SK-N-SH (cell line): ENCODE measurements at regions of chr5 and their contacts with region 1.

Region 1: GRCh38 chr5:137778772-137779564 is 24.8 kb upstream of the HNRNPA0 start:
- DNase-seq: peak; percentile 35
- H3K4me3 ChIP-seq: no peak overlapping the region; a peak in 1 of 4 replicates
- H3K27ac ChIP-seq: no peak overlapping the region
- H3K4me1 ChIP-seq: no peaks in the 10 kb centered on the region
- H3K27me3 ChIP-seq: no peaks in the 10 kb centered on the region
- CTCF ChIP-seq: peak; percentile 83
- EP300 ChIP-seq: no peak
- RAD21 ChIP-seq: peak; percentile 81

Region 2: DNA sequence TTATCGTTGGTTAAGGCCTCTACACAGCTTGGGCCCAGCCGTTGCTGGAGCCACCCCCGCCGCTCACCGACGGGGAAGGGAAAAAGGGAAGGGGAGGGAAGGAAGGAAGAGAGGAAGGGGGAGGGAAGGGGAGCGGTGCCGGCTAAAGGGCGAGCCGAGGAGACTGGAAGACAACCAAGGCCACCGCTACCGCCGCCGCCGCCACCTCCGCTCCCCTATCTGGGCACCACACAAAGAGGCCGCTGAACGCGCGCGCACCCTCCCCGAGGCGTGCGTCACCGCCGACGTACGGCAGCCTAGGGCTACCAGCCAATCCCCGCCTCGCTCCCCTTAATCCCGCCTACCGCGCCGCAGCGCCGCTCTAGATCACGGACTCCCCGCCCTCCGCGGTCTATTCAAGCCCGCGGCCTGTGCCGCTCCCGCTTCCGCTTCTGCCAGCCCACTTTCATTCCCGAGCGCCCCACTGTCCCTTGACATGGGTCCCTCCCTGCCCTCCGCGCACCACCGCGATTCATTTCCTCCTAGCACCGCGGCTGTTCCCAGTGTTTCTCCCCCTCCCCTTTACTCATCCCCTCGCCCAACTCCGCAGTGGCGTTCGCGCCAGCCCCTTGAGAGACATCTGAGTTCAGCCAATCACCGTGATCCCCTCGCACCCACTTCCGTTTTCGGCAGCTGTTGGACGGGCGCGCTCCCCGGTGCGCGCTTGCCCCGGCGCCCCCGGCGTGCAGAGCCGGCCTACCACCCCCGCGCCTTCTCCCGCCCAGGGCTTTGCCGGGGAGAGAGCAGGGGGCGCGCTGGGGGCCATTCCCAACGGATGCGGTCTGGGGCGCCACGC is 24.6 kb before region 1 on chr5 and contains the start of gene HNRNPA0:
- CTCF ChIA-PET with region 1: interaction called, 51 read pairs
- POLR2A ChIA-PET with region 1: interaction called, 3 read pairs
- DNase-seq: peak; percentile 97
- H3K4me3 ChIP-seq: peak within 1 kb of the TSS; percentile 93 to 94
- H3K27ac ChIP-seq: peak within 1 kb of the TSS; percentile 97
- H3K4me1 ChIP-seq: peaks cover 0 to 6% of the 10 kb centered on the region in 2 experiments; a peak in 2 of 4 replicates
- H3K27me3 ChIP-seq: no peaks in the 10 kb centered on the region
- CTCF ChIP-seq: no peak
- EP300 ChIP-seq: peak; percentile 97 to 99
- RAD21 ChIP-seq: no peak
- polyA plus RNA-seq, gene HNRNPA0: 19.2 and 24.9 TPM in 2 replicates

Region 3: DNA sequence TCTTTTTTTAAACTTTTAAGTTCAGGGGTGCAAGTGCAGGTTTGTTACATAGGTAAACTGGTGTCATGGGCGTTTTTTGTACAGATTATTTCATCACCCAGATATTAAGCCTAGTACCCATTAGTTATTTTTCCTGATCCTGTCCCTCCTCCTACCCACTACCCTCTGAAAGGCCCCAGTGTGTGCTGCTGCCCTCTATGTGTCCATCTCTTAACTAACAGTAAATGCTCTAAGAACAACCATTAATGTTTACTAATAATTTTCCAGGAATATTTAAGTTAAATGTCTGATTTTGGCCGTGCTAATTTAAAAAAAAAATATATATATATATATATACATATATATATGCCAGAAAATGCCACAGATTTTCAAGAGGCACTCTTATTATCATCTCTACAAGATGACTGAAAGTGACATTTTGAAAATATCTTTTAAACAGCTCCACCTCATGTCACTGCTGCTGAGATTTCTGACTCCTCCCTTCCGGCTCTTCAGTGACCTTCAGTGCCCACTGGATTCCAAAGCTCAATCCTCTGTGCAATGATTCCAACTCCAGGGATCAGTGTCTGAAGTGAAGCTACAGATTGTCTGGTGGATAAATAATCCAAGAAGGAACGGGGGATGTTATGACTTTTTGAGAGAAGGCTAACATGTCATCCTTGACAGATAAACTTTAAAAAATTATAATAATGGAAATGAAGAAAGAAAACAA is 21.9 kb after region 1 on chr5:
- CTCF ChIA-PET with region 1: interaction called, 21 read pairs
- POLR2A ChIA-PET with region 1: no interaction called
- DNase-seq: no peak
- H3K4me3 ChIP-seq: no peak overlapping the region
- H3K27ac ChIP-seq: no peak overlapping the region
- H3K4me1 ChIP-seq: no peaks in the 10 kb centered on the region; a peak in 1 of 4 replicates
- H3K27me3 ChIP-seq: no peaks in the 10 kb centered on the region
- CTCF ChIP-seq: no peak
- EP300 ChIP-seq: no peak
- RAD21 ChIP-seq: no peak

Region 4: GRCh38 chr5:137822158-137822764 is 43.3 kb after region 1 on chr5:
- CTCF ChIA-PET with region 1: interaction called, 33 read pairs
- POLR2A ChIA-PET with region 1: no interaction called
- DNase-seq: peak; percentile 60
- H3K4me3 ChIP-seq: no peak overlapping the region
- H3K27ac ChIP-seq: no peak overlapping the region
- H3K4me1 ChIP-seq: no peaks in the 10 kb centered on the region
- H3K27me3 ChIP-seq: no peaks in the 10 kb centered on the region
- CTCF ChIP-seq: peak; percentile 57
- EP300 ChIP-seq: no peak
- RAD21 ChIP-seq: peak; percentile 81

Region 5: GRCh38 chr5:137888857-137889759 is 110.1 kb after region 1 on chr5 and contains the start of gene PKD2L2:
- CTCF ChIA-PET with region 1: interaction called, 14 read pairs
- POLR2A ChIA-PET with region 1: no interaction called
- DNase-seq: peak; percentile 90
- H3K4me3 ChIP-seq: peak within 1 kb of the TSS; percentile 72 to 74
- H3K27ac ChIP-seq: peak within 1 kb of the TSS; percentile 86 to 99
- H3K4me1 ChIP-seq: peaks cover 0 to 21% of the 10 kb centered on the region in 2 experiments; a peak in 2 of 4 replicates
- H3K27me3 ChIP-seq: no peaks in the 10 kb centered on the region
- CTCF ChIP-seq: no peak
- EP300 ChIP-seq: no peak
- RAD21 ChIP-seq: no peak
- polyA plus RNA-seq, gene PKD2L2: 0.11 and 0.26 TPM in 2 replicates

Region 6: GRCh38 chr5:138065102-138065501 is 286.1 kb after region 1 on chr5:
- CTCF ChIA-PET with region 1: interaction called, 40 read pairs
- POLR2A ChIA-PET with region 1: no interaction called
- DNase-seq: no peak
- H3K4me3 ChIP-seq: no peak overlapping the region
- H3K27ac ChIP-seq: no peak overlapping the region
- H3K4me1 ChIP-seq: no peaks in the 10 kb centered on the region
- H3K27me3 ChIP-seq: no peaks in the 10 kb centered on the region
- CTCF ChIP-seq: peak; percentile 30
- EP300 ChIP-seq: no peak
- RAD21 ChIP-seq: no peak